SK-N-SH (cell line): ENCODE measurements at regions of chr16 and their contacts with region 1.

Region 1: DNA sequence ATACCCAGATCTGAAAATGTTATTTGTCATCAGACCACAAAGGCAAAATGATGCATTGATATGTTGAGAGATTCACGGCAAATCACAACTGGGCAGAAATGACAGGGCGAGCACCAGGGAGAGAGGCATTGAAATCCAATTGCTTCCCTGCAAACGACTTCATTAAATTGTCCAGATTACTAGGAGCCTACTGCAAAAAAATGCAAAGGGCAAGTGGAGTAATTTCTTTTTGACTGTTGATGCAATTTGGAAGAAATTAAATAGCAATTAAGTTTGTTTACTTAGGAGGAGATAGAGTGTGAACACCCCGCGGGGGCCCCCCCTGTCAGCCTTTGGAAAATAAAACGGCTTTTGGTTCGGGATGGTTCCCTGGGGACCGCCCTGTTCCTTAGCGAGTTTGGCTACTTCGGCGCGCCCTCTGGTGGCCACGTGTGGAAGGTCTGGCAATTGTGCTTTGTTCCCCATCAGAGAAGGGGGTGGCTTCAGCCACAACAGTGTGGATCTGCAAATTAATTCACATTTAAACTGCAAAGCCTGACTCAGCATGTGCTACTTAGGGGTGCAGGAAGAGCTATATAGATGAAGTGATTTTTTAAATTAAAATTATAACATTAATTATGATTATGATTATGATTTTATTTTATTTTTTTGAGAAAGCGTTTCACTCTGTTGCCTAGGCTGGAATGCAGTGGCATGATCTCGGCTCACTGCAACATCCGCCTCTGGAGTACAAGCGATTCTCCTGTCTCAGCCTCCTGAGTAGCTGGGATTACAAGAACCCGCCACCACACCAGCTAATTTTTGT is 14.5 kb upstream of the TMC7 start:
- DNase-seq: peak; percentile 84
- H3K4me3 ChIP-seq: peak overlapping the region; percentile 37 to 63
- H3K27ac ChIP-seq: no peak overlapping the region
- H3K4me1 ChIP-seq: peaks cover 0 to 5% of the 10 kb centered on the region in 2 experiments; a peak in 1 of 4 replicates
- H3K27me3 ChIP-seq: no peaks in the 10 kb centered on the region
- CTCF ChIP-seq: peak; percentile 96
- EP300 ChIP-seq: no peak
- RAD21 ChIP-seq: peak; percentile 86

Region 2: DNA sequence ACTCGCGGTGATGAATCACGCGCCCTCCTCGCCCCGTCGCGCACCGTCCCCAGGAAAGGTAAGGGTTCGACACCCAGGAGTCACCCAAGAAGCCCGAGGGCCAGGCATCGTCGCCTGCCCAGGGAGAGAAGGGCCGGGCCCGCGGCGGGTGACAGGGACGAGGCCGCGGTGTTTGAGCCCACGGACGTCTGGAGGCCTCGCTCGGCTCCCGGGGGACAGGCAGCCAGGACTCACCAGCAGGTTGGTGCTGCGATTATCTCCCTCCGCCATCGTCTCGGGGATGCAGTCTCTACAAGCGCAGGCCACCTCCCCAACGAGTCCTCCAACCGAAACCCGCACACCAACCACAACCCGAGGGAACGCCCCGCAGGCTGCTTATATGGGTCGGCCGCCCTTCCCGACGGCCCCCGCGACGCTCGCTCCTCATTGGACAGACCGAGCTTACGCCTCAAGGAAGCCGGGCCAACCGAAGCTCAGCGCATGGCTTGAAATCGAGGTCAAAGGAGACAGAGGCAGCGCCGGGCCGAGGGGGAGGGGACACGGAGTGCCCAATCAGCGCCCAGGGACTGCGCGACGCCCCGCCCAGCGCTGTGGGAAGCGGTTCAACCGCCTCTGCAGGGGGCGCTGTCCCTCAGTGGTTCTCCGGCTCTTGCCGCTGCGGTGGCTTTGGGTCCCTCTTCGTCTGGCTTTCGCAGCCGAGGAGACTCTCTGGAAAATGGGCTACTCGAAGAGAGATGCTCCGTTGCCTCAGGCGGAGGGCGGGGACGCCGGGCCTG is 167.9 kb before region 1 on chr16 and contains the start of gene ARL6IP1:
- CTCF ChIA-PET with region 1: interaction called, 24 read pairs
- POLR2A ChIA-PET with region 1: interaction called, 3 read pairs
- DNase-seq: peak; percentile 97
- H3K4me3 ChIP-seq: peak within 1 kb of the TSS; percentile 97 to 98
- H3K27ac ChIP-seq: peak within 1 kb of the TSS; percentile 86 to 96
- H3K4me1 ChIP-seq: peaks cover 11 to 38% of the 10 kb centered on the region in 2 experiments; a peak in 3 of 4 replicates
- H3K27me3 ChIP-seq: no peaks in the 10 kb centered on the region
- CTCF ChIP-seq: peak; percentile 88
- EP300 ChIP-seq: peak in 1 of 2 experiments; percentile 24; a peak in 1 of 4 replicates
- RAD21 ChIP-seq: peak; percentile 61
- polyA plus RNA-seq, gene ARL6IP1: 95.8 and 104 TPM in 2 replicates

Region 3: GRCh38 chr16:18959031-18959505 is 10.2 kb before region 1 on chr16:
- CTCF ChIA-PET with region 1: interaction called, 21 read pairs
- POLR2A ChIA-PET with region 1: no interaction called
- DNase-seq: no peak
- H3K4me3 ChIP-seq: no peak overlapping the region
- H3K27ac ChIP-seq: peak overlapping the region in 1 of 2 experiments; percentile 34; a peak in 2 of 4 replicates
- H3K4me1 ChIP-seq: peaks cover 0 to 9% of the 10 kb centered on the region in 2 experiments; a peak in 1 of 4 replicates
- H3K27me3 ChIP-seq: no peaks in the 10 kb centered on the region
- CTCF ChIP-seq: no peak
- EP300 ChIP-seq: no peak
- RAD21 ChIP-seq: no peak

Region 4: GRCh38 chr16:18983565-18984424 is 14.5 kb after region 1 on chr16 and contains the start of gene TMC7:
- CTCF ChIA-PET with region 1: interaction called, 13 read pairs
- POLR2A ChIA-PET with region 1: interaction called, 4 read pairs
- DNase-seq: peak; percentile 94
- H3K4me3 ChIP-seq: peak within 1 kb of the TSS; percentile 61 to 77
- H3K27ac ChIP-seq: peak within 1 kb of the TSS; percentile 24 to 33; a peak in 2 of 4 replicates
- H3K4me1 ChIP-seq: peaks cover 0 to 3% of the 10 kb centered on the region in 2 experiments; a peak in 1 of 4 replicates
- H3K27me3 ChIP-seq: no peaks in the 10 kb centered on the region
- CTCF ChIP-seq: peak; percentile 87
- EP300 ChIP-seq: no peak
- RAD21 ChIP-seq: peak; percentile 77
- polyA plus RNA-seq, gene TMC7: 0.66 and 0.93 TPM in 2 replicates

Region 5: DNA sequence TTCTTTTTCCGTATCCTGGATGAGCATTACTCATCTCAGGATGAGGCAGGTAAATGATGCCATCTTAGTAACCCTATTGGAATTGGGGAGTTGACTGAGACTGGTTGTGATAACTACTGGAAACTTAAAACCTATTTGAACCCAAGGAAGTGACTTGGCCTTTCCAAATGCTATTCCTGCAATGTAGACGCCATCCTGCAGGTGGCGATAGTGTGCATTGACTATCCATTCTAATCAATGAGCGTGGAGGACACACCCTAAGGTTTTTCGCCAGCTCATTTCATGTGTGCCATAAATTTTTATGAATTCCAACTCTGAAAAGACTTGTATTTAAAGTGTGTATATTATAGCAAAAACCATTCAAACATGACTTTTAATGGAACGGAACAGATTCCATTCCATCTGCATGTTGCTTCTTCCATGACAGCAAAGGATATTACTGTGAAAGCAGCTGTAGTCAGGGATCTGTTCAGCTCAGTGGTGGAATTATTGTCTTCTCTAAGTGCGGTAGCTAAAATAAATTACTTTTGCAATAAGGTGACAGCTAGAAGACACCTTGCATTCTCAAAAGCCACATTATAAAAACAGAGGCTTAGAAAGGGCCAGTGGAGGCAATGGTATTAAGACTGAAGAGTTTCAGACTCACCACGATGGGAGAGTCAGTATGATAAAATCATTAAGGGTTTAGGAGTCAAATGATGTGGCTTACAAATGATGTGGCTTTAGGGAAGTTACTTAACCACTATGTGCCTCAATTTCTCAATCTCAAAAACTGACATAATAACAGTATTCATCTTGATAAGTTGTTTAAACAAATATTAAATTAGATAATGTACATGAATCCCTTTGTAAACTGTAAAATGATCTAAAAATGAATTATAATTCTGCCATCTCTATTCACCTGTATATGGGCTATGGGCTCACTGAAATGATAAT is 254.3 kb after region 1 on chr16:
- CTCF ChIA-PET with region 1: no interaction called
- POLR2A ChIA-PET with region 1: no interaction called
- DNase-seq: no peak
- H3K4me3 ChIP-seq: peak overlapping the region in 1 of 2 experiments; percentile 39; a peak in 1 of 4 replicates
- H3K27ac ChIP-seq: no peak overlapping the region
- H3K4me1 ChIP-seq: no peaks in the 10 kb centered on the region
- H3K27me3 ChIP-seq: no peaks in the 10 kb centered on the region
- CTCF ChIP-seq: peak; percentile 57
- EP300 ChIP-seq: no peak
- RAD21 ChIP-seq: peak; percentile 22; the same call in 1 of the 2 replicates